Heart left ventricle (tissue), 16 donors: ENCODE measurements at regions of chr12 and their contacts with region 1.

Region 1: DNA sequence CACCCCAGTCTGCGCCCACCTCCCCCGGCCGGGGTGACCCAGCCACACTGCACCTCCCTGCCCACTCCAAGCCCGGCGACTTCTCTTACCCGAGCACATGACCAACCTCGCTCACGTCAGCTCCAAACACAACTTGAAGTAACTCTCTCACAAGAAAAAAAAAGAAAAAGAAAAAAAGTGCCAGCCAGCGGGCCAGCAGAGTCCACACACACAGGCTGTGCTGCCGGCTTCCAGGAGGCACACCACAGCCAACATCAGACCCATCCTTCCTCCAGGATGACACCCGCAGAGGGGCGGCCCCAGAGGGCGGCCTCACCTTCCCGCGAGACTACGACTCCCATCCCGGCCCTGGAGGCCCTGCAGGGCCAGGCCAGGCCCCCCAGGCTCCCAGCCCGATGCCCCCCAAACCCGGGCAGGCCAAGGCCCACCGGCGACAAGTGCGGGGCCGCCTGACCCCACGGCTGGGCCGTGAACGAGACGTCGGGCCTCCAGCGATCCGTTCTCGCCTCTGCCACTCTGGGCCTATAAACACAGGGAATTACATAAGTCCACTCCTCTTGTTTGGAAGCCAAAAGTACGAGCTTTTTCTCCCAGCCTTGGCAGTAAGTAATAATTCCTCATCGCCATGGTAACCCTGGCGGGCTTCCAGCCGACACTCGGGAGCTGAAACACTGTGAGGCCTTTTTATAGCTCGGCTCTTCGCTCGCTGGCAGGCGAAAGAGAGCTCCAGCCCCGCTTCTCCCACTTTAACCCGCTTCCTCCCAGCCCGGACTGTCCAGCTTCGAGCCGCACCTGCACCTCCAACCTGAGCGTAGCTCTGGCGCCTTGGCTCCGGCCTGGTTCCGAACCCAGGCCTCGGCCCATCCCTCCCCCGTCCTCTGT is 49.1 kb downstream of the NCOR2 start:
- DNase-seq: peak; percentile 97 to 99 (median 98)
- ATAC-seq: peak; percentile 69 to 79 (median 72)
- H3K4me3 ChIP-seq: peak overlapping the region; percentile 35 to 81 (median 58)
- H3K27ac ChIP-seq: peak overlapping the region; percentile 90 to 100 (median 95)
- H3K4me1 ChIP-seq: peaks cover 15 to 98% (median 85%) of the 10 kb centered on the region in 12 donors
- H3K27me3 ChIP-seq: no peaks in the 10 kb centered on the region
- CTCF ChIP-seq: no peak
- POLR2A ChIP-seq: peak in 1 of 2 donors; percentile 32

Region 2: GRCh38 chr12:124379938-124380754 is 138.1 kb before region 1 on chr12:
- intact Hi-C with region 1: loop called in 3 of 10 experiments (anchors 5 to 10 kb)
- DNase-seq: peak; percentile 71 to 85 (median 78)
- ATAC-seq: peak; percentile 36 to 71 (median 54)
- H3K4me3 ChIP-seq: peak overlapping the region in 3 of 12 donors; percentile 3 to 25 (median 23)
- H3K27ac ChIP-seq: peak overlapping the region; percentile 74 to 96 (median 86)
- H3K4me1 ChIP-seq: peaks cover 21 to 70% (median 51%) of the 10 kb centered on the region in 12 donors
- H3K27me3 ChIP-seq: no peaks in the 10 kb centered on the region
- CTCF ChIP-seq: peak; percentile 26 to 80 (median 54)
- POLR2A ChIP-seq: no peak

Region 3: GRCh38 chr12:124453419-124454351 is 64.6 kb before region 1 on chr12:
- intact Hi-C with region 1: loop called in 2 of 10 experiments (anchors 5 to 10 kb)
- DNase-seq: peak; percentile 90 to 96 (median 92)
- ATAC-seq: peak; percentile 82 to 90 (median 82)
- H3K4me3 ChIP-seq: peak overlapping the region in 8 of 12 donors; percentile 2 to 38 (median 19)
- H3K27ac ChIP-seq: peak overlapping the region; percentile 37 to 94 (median 90)
- H3K4me1 ChIP-seq: peaks cover 19 to 82% (median 66%) of the 10 kb centered on the region in 12 donors
- H3K27me3 ChIP-seq: no peaks in the 10 kb centered on the region
- CTCF ChIP-seq: peak in 4 of 12 donors; percentile 2 to 31 (median 23)
- POLR2A ChIP-seq: no peak

Region 4: DNA sequence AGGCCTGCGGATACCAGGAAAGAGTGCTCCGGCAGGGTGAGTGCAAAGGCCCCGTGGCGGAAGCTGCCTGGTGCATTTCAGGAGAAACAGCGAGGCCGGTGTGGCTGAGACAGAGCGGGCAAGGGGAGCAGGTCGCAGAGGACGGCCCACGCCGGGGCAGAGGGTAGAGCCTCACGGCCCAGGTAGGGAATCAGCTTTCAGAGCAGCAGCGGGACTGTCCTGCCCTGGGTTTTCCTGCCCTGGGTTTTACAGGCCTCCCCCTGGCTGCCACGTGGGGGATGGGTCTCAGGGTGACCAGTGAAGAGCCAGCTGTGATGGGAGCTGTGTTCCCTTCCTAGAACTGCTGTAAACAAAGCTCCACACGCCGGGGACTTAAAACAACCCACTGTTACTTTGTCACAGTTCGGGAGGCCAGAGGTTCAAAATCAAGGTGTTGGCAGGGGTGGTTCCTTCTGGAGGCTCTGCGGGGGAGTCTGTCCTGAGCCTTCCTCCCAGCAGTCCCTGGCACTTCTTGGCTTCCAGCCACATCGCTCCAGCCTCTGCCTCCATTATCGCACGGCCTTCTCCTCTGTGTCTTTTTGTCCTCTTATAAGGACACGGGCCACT is 38.7 kb after region 1 on chr12:
- intact Hi-C with region 1: loop called in 6 of 10 experiments (anchors 5 kb)
- DNase-seq: no peak
- ATAC-seq: peak in 2 of 4 donors; percentile 27 to 29
- H3K4me3 ChIP-seq: no peak overlapping the region
- H3K27ac ChIP-seq: peak overlapping the region in 6 of 12 donors; percentile 4 to 74 (median 58)
- H3K4me1 ChIP-seq: peaks cover 10 to 83% (median 64%) of the 10 kb centered on the region in 12 donors
- H3K27me3 ChIP-seq: no peaks in the 10 kb centered on the region
- CTCF ChIP-seq: peak in 1 of 12 donors; percentile 23
- POLR2A ChIP-seq: no peak

Region 5: DNA sequence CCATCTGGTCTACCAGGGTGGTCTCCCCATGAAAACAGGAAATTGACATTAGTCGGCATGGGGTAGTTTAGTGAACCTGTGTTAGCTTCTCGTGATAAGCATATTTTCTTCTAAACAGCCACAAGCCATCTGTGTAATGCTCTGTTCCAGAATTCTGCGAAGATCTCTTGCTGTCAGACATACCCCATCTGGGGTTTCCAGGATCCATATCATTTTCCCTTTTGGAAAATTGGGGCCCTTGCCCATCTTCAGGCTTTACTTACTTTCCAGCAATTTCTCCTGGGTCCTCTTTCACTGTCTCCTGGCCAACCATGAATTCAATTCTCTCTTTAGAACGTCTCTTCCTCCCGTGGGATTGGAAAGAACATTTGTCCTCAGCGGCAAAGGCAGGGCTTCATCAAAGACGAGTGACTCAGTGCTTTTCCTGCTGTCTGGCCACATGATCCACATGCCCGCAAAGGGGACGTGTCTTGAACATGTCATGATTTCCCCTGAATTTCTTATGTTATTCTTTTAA is 70.5 kb after region 1 on chr12:
- intact Hi-C with region 1: no loop called
- DNase-seq: peak; percentile 72 to 83 (median 76)
- ATAC-seq: peak; percentile 80 to 86 (median 85)
- H3K4me3 ChIP-seq: no peak overlapping the region
- H3K27ac ChIP-seq: peak overlapping the region; percentile 2 to 78 (median 52)
- H3K4me1 ChIP-seq: peaks cover 0 to 57% (median 12%) of the 10 kb centered on the region in 12 donors
- H3K27me3 ChIP-seq: no peaks in the 10 kb centered on the region
- CTCF ChIP-seq: no peak
- POLR2A ChIP-seq: no peak

Region 6: DNA sequence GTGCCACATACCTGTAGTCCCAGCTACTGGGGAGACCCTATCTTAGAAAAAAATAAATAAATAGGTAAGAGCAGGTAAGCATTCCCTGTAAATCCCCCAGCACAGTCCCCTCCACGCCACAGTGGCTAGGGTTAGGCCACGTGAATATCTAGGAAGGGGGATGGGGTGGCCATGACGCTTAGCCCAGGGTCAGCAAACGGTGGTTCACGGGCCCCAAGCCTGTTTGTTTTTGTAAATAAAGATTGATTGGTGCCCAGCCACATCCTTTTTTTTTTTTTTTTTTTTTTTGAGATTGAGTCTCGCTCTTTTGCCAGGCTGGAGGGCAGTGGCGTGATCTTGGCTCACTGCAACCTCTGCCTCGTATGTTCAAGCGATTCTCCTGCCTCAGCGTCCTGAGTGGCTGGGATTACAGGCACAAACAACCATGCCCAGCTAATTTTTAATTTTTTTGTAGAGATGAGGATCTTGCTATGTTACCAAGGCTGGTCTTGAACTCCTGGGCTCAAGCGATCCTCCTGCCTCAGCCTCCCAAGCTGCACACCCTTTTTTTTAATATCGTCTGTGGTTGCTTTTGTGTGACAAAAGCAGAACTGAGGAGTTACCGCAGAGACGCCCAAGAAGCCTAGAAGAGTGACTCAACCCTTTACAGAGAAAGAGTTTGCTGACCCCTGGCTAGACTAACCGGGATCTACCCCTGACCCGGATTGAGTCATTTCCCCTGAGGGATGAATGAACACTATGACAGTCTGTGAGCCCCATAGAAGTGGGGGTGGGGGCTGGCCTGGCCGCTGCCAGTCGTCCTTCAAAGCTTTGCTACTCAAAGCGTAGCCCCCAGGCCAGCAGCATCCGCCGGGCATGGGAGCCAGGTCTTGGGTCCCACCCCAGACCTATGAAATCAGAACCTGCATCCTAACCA is 162.8 kb after region 1 on chr12:
- intact Hi-C with region 1: loop called in 2 of 10 experiments (anchors 5 to 10 kb)
- DNase-seq: peak in 3 of 5 donors; percentile 62 to 86 (median 76)
- ATAC-seq: peak; percentile 27 to 82 (median 60)
- H3K4me3 ChIP-seq: no peak overlapping the region
- H3K27ac ChIP-seq: peak overlapping the region; percentile 11 to 90 (median 80)
- H3K4me1 ChIP-seq: peaks cover 13 to 75% (median 53%) of the 10 kb centered on the region in 12 donors
- H3K27me3 ChIP-seq: no peaks in the 10 kb centered on the region
- CTCF ChIP-seq: peak in 11 of 12 donors; percentile 11 to 48 (median 34)
- POLR2A ChIP-seq: no peak